ENCODE measurements at regions of chr1 and their contacts with region 1.

Region 1: GRCh38 chr1:151945725-151946364 is 36.5 kb upstream of the THEM4 start:
- DNase-seq: peak; percentile 77
- H3K4me3 Mint-ChIP-seq: peak overlapping the region; percentile 58
- H3K27ac Mint-ChIP-seq: peak overlapping the region; percentile 88
- H3K4me1 Mint-ChIP-seq: peaks cover 50% of the 10 kb centered on the region
- H3K27me3 Mint-ChIP-seq: peaks cover 1% of the 10 kb centered on the region

Region 2: GRCh38 chr1:151909150-151910149 is 36.4 kb before region 1 on chr1 and contains the start of gene THEM4:
- intact Hi-C with region 1: loop called (anchors 1 kb)
- DNase-seq: peak; percentile 87
- H3K4me3 Mint-ChIP-seq: peak within 1 kb of the TSS; percentile 80
- H3K27ac Mint-ChIP-seq: peak within 1 kb of the TSS; percentile 85
- H3K4me1 Mint-ChIP-seq: peaks cover 37% of the 10 kb centered on the region
- H3K27me3 Mint-ChIP-seq: peaks cover 5% of the 10 kb centered on the region
- total RNA-seq, gene THEM4: 24.7 and 27.5 TPM in 2 replicates

Region 3: GRCh38 chr1:151984313-151984956 is 38.6 kb after region 1 on chr1:
- intact Hi-C with region 1: loop called (anchors 1 kb)
- DNase-seq: peak; percentile 39
- H3K4me3 Mint-ChIP-seq: peak overlapping the region; percentile 64
- H3K27ac Mint-ChIP-seq: peak overlapping the region; percentile 90
- H3K4me1 Mint-ChIP-seq: peaks cover 61% of the 10 kb centered on the region
- H3K27me3 Mint-ChIP-seq: peaks cover 3% of the 10 kb centered on the region

Region 4: DNA sequence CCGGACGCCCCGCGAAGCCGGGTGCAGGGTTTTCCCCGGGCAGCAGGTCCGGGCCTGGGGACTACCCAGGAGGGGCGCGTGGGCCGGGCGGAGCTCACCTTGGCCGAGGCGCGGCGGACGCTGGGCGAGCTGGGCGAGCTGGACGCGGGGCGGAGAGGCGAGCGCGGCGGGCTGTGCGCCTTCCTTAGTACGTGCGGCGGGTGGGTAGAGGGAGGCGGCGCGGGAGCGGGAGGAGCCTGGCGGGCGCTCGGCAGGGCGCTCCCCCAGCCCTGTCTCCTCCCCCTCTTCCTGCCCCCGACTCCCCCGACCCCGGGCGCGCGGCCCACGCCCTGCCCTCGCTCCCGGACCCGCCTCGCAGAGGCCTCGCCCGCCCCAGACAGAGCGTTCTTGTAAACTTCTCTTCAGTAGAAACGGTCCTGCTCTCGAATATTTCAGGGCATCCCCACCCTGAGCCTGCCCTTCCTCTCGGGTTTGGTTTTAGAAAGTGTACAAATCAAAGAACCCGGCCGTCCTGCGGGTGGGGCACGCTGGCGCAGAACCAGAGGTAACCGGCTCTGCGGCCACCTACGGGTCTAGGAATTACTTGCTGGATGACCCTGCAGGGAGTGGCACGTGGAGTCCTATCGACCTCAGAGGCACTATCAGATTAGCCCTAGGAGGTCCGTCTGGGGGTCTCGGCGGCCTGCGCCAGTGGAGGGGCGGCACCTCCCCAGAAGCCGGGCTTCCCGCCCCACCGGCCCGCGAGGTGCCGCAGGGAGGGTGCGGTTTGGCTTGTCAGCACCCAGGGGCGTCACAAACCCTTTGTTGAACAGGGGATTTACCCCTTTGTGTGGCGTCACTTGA is 48.0 kb after region 1 on chr1 and contains the start of gene S100A10:
- intact Hi-C with region 1: loop called (anchors 1 kb)
- DNase-seq: peak; percentile 77
- H3K4me3 Mint-ChIP-seq: peak within 1 kb of the TSS; percentile 98
- H3K27ac Mint-ChIP-seq: peak within 1 kb of the TSS; percentile 98
- H3K4me1 Mint-ChIP-seq: peaks cover 49% of the 10 kb centered on the region
- H3K27me3 Mint-ChIP-seq: peaks cover 1% of the 10 kb centered on the region
- total RNA-seq, gene S100A10: 105 and 106 TPM in 2 replicates

Region 5: GRCh38 chr1:152034646-152035405 is 89.0 kb after region 1 on chr1:
- intact Hi-C with region 1: loop called (anchors 1 kb)
- DNase-seq: peak; percentile 65
- H3K4me3 Mint-ChIP-seq: peak overlapping the region; percentile 96
- H3K27ac Mint-ChIP-seq: peak overlapping the region; percentile 94
- H3K4me1 Mint-ChIP-seq: peaks cover 41% of the 10 kb centered on the region
- H3K27me3 Mint-ChIP-seq: no peaks in the 10 kb centered on the region

Measured in activated T-helper 1 cell treated with anti-CD3 and anti-CD28 coated beads, Interleukin-12 subunit alpha, Interleukin-12 subunit beta, Interleukin-2, Interleukin-4 antibody, amounts not matched to agents 30 ng/mL and 10 ng/mL and 1 ng/mL, durations not matched to agents 14 hours and 24 hours and 36 hours (primary cell).